KBM-7 (cell line): ENCODE measurements at regions of chr12 and their contacts with region 1.

Region 1: DNA sequence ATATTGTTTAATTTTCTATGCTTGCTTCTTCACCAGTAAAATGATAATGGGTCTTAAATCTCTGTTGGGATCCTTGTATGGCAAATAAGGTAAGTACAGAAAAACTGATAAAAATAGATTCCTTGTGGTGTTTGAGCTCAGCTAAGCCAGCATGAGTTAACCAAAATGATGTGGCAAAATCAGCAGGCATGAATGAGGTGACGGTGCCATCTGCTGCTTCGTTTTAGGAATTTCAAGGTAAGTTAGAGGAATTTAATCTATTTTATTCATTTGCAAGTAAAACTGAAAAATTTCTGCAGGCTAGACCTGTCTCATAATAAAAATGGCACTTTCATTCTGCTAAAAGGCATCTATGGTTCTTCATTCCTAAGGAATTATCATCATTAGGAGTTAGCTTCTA is 10.0 kb upstream of the CLEC7A start:
- DNase-seq: peak; percentile 79

Region 2: DNA sequence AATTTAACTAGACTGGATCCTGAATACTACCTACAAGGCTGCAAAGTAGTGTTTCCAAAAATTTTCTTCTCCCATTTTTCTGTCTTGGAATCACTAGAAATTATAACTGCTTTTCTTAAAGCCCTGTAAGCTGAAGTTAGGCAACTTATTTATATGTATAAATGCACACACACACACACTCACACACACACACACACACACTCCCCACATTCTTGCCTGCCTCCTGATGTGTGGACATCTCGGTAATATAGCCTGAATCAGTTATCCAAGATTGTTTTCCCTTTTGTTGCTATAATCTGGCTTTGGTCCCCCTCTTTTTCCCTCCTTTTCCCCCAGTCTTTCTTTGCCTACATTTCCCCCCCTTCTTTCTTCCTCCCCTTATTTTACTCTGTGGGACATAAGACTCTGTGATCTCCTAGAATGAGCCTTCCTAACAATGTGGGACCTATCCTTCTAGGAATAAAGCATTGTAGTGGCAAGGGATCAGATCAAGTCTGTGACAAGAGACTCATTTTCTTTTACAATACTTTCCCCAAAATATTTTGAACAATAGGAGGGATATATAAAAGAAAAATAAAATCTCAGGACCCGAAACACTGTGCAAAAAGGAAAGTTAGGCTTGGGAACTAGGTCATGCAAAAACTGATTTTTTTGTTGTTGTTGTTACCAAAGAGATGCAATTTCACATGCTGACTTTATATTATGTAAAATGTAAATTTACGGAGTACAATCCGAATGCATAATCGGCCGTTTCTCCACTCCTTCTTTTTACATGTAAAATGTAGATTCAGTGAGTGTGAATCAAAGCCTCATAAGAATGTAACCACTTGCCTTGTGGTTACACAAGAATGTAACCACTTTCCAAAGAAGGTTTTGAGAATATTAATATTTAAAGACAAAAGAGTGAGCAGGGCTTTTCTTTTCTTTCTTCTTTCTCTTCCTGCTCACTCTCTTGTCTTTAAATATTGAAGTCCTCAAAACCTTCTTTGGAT is 353.0 kb before region 1 on chr12:
- in situ Hi-C with region 1: no loop called
- DNase-seq: peak; percentile 83

Region 3: DNA sequence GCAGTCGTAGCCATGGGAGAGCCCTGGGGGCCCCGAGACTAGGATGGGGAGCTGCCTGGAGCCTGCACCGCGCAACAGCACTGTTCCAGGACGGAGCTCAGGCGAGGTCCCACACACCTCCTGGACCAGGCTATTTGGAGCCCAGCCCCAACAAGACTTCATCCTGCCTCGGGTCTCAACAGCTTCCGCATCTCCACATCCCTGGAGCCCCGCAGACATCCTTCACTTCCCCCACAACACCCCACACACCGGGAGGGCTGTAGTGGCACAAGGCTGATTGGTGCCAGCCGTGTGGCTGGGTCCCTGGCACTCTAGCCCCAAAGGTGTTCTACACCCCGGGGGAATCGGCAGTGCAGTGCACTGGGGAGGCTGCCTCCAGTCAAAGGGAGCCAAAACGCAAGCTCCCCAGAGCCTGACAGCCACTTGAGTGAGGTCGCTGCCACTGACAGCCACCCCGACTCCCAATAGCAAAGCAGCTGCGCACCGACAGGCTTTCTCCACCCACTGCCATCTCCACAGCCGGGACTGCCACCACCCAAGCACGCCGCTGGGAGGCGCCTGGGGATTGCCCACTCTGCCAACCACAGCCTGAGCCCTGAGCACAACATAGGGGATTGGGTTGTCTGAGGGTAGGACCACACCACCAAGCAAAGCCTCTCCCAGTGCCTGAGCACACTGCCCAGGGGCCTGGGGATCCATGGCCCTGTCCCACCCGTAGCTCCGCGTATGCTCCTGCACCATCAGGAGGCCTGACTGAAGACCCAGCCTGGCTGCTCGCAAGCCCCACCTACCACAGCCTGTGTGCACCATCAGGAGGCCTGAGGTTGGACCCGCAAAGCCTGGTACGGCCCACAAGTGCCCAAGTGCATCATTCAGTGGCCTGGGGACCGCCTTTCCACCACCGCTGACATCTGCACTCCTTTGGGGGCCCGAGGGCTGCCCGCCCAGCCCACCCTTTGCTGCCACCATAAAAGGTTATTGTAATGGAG is 325.9 kb before region 1 on chr12:
- in situ Hi-C with region 1: loop called (anchors 25 kb)
- DNase-seq: peak; percentile 98

Region 4: DNA sequence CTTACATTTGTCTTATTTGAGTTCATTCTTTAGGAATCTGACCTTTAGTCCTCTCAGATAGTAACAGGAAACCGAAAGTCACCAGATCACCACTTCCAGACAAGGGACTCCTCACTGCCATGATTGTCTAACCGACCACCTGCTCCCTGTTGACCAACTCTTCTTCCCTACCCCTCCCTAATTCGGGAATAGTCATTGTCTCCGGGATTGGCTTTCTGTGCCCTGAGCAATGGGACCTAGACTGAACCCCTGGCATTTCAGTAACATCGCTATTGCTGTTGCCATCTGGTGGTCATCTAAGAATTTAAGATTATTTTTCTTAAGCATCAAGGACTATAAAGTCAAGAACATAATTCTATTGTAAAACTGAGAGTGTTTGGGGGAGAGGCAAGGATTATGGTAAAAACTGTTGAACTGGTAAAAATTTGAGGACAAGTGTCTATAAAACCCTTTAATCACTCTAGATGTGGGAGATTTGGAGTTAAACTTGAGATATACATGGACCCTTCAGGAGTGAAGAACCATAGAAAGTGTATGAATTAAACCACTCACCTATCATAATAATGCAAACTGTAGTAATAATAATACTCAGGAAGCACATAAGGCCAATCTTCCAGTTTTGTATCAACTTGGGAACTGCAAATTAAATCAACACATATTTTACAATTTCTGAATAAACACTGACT is 214.2 kb before region 1 on chr12:
- in situ Hi-C with region 1: loop called (anchors 25 kb)
- DNase-seq: peak; percentile 61

Region 5: GRCh38 chr12:10033783-10034545 is 106.0 kb before region 1 on chr12:
- in situ Hi-C with region 1: loop called (anchors 25 kb)
- DNase-seq: peak; percentile 59

Region 6: DNA sequence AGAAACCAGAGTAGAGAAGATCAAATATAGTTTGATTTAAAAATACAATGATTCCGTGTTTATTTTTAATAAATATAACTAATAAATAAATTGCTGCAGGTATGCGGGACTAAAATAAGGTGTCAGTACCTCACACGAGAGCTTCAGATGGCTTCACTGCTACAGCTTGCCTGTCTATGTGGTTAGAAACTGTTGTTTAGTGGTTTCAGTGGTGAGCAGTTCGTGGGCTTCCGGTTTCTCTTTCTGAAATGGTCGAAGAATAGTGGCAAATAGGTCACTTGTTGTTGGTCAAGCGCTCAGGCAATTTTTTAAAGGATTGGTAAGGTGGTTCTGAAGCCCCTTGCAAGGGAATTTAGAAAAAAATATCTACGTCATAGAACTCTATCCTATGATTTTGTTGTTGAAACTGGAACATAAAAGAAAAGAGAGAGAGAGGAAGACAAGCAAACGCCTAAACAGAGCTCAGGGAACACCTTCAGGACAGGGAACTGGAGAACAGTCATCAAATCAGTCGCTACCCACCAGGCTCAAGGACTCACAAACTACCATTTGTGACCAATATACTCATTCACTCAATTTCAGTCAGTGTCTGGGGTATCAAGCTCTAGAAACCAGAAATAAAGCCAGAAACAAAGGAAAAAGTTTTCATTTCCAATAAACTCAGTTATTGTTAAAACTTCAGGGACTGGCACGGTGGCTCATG is 104.0 kb after region 1 on chr12:
- in situ Hi-C with region 1: no loop called
- DNase-seq: peak; percentile 50

Region 7: GRCh38 chr12:10285919-10286318 is 145.9 kb after region 1 on chr12:
- in situ Hi-C with region 1: no loop called
- DNase-seq: no peak